ENCODE measurements at regions of chr3 and their contacts with region 1.

Region 1: DNA sequence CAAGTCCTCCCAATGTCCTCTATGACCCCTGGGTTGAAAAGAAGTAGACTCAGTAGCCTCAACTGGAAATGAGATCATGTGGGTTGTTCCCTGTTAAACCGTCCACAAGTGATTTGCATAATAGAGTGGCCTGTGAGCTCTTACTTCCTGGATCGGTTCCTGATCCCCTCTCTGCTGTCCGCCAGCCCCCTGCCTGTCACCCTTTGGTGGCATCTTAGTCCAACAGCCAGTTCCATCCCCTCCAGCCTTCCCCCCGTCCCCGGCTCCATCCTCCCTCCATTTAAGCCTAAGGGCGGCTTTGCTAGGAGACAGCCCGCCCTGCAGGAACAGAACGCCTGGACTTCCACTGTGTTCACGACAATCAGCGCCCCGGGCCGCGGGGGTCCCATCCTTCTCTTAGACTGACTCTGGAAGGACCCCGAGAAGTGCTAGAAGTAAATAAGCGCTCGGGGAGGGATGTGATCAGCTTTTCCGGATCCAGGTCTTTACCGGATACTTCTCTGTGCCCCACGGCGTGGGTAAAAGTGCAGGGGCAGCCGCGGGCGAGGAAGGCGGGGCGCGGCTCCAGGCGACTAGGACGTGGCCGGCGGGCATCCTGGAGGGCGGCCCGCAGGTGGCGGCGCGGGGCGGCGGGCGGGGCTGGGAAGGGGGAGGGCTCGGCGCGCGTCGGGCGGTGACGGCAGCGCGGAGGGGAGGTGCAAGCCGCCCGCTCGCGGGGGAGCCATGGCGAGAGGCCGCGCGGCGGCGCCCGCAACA is 51.2 kb upstream of the ULK4 start:
- DNase-seq: peak; percentile 83 to 88 (median 87)
- ATAC-seq: peak; percentile 80 to 89 (median 85)
- H3K4me3 ChIP-seq: peak overlapping the region; percentile 55 to 91 (median 55)
- H3K27ac ChIP-seq: peak overlapping the region; percentile 59 to 89 (median 85)
- H3K4me1 ChIP-seq: peaks cover 0 to 11% (median 5%) of the 10 kb centered on the region in 4 donors
- H3K27me3 ChIP-seq: no peaks in the 10 kb centered on the region
- CTCF ChIP-seq: peak in 1 of 4 donors; percentile 33
- POLR2A ChIP-seq: peak; percentile 39

Region 2: DNA sequence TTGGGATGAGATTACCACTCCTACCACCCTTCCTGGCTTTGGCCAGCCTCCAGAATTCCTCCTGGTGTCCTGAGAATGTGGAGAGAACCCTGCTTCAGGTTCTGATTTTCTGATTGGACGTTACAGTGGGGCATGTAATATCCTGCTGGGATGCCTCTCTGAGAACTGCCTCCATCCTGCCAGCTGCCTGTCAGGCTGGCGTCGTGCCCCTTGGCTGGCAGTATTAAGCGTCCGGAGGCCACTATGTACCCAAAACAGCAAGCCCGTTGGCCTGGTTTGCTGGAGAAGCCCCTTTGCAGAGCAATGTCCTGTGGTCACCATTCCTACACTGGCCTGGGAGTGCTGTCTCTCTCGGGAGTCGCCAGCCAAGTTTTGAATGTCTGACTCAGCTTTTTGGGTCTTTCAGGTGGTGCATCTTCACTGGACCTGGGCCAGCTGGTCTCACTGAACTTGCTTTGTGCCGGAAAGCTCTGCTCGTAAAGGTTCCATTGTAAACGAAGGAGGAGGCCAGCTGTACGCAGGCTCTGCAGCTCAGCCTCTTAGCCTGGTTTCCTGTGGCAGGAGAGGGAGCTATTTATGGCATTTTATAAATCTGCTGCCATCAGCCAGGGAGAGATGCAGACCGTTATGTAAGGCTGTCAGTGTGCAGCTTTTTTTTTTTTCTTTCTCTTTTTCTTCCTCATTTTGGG is 58.9 kb after region 1 on chr3:
- intact Hi-C with region 1: loop called (anchors 10 kb)
- DNase-seq: peak; percentile 62 to 87 (median 85)
- ATAC-seq: peak; percentile 80 to 93 (median 91)
- H3K4me3 ChIP-seq: peak overlapping the region; percentile 1 to 35 (median 9)
- H3K27ac ChIP-seq: peak overlapping the region; percentile 19 to 78 (median 46)
- H3K4me1 ChIP-seq: peaks cover 0 to 27% (median 14%) of the 10 kb centered on the region in 4 donors
- H3K27me3 ChIP-seq: no peaks in the 10 kb centered on the region
- CTCF ChIP-seq: no peak
- POLR2A ChIP-seq: no peak

Measured in right lobe of liver (tissue), 6 donors.